ENCODE measurements at regions of chr20 and their contacts with region 1.

Region 1: GRCh38 chr20:25399037-25399430 is 8.4 kb upstream of the ABHD12 start:
- H3K4me3 Mint-ChIP-seq: no peak overlapping the region
- H3K27ac Mint-ChIP-seq: no peak overlapping the region
- H3K4me1 Mint-ChIP-seq: peaks cover 21% of the 10 kb centered on the region
- H3K27me3 Mint-ChIP-seq: peaks cover 2% of the 10 kb centered on the region

Region 2: DNA sequence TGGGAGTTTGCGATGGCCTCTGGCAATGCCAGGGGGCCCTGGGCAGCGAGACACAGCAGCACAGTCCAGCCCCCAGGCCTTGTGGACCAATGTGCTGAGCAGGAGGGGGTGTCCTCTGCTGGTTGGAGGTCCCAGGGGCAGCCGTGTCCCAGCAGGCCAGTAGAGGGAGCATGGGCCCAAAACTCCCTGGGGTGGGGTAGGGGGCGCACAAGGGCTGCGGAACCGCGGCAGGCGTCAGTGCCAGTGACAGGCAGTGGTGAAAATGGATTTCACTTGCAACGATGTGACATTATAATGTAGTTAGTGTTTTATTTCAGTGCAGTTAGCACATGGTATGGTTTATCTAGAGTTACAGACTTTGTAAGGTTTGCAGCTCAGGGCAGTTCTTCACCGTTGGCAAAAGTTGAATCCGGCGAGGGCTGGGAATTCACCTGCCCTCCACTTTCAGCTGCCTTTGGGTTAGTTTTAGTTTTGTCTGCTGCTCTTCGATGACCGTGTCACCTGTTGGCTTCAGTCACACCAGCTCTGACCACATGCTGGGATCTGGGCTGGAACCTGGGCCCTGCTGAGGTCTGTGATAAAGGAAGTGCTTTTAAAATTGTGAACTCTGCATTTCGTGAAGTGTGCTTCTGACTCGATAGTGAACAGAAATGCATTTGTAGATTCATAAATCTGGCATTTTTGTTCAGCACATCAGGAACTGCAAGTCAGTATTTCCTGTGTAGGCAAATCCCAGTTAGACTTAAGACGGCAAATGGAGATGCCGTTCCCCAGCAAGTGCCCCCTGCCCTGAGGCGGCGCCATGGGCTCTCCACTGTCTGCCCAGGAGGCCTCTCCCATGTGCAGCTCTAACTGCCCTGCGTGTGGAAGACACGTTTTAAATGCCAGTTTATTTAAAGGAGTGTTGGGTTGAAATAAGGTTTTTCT is 104.3 kb before region 1 on chr20:
- intact Hi-C with region 1: loop called (anchors 1 kb)
- H3K4me3 Mint-ChIP-seq: no peak overlapping the region
- H3K27ac Mint-ChIP-seq: peak overlapping the region; percentile 85
- H3K4me1 Mint-ChIP-seq: peaks cover 55% of the 10 kb centered on the region
- H3K27me3 Mint-ChIP-seq: no peaks in the 10 kb centered on the region

Region 3: DNA sequence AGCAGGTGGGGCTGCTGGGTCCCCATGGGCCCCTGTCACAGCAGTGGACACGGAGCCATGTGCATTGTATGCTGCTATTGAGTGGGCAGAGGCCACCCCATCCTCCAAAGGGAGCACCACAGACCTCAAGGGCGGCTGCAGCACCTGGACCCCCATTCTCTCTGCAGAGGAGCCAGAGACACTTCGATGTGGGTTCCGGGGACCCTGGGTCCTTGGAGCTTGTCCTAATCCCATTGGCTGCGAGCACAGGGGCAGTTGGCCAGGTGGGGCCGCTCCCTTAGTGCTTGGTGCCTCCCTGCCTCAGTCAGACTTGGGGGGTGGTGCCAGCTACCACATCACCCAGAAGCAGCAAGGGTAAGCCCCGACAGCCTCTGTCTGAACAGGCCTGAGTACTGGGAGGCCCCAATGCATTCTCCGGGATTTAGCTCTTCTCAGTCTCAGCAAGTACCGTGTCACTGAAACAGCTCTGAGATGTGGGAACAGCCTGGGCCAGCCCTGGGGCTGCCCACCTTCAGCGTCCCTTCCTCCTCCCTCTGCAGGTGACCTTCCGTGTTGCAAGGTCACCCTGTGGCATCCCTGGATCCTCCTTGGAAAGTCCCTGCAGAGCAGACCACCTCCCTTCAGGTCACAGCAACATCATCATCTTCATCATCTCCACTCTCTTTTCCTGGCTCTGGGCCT is 82.3 kb after region 1 on chr20:
- intact Hi-C with region 1: no loop called
- H3K4me3 Mint-ChIP-seq: no peak overlapping the region
- H3K27ac Mint-ChIP-seq: no peak overlapping the region
- H3K4me1 Mint-ChIP-seq: peaks cover 21% of the 10 kb centered on the region
- H3K27me3 Mint-ChIP-seq: peaks cover 15% of the 10 kb centered on the region

Region 4: DNA sequence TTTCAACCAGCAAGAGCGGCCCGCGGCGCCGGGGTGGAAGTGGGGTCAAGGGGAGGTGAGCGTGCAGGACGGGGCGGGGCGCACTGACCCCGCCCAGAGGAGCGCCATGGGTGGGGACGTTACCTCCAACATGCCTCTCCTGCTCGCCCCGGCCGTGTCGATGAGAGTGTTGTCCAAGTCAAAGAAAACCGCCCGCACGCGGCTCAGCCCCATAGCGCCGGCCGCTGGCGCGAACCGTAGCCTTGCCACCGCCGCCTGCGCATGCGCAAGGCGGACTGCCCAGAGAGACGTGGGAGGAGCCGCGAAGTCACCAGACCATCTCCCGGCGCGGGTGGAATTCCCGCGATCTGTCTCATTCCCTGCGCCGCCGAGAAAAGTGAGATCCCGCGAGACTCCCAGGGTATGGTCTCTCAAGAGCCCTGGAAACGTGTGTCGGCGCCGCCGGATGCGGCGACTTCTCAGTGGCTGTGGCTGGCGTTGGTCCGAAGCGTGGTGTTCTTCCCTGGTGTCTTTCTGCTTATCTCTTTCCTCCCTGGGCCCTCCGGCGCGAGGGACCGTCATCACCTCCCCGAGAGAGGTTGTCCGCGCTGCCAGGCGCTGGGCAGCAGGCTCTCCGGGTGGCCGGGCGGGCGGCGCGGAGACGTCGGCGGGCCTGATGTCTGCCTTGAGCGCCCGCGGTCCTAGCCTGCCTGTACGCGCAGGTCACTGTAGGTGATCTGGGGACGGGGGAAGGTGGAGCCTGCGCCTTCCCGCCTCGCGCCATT is 224.9 kb after region 1 on chr20 and contains the start of gene NANP:
- intact Hi-C with region 1: loop called (anchors 5 kb)
- H3K4me3 Mint-ChIP-seq: peak within 1 kb of the TSS; percentile 83
- H3K27ac Mint-ChIP-seq: peak within 1 kb of the TSS; percentile 92
- H3K4me1 Mint-ChIP-seq: peaks cover 39% of the 10 kb centered on the region
- H3K27me3 Mint-ChIP-seq: no peaks in the 10 kb centered on the region

Measured in dendritic cell treated with granulocyte-macrophage colony-stimulating factor and Interleukin-4, amounts not matched to agents 40 ng/mL and 50 ng/mL, for 4 days (primary cell).